K562 (cell line): ENCODE measurements at regions of chr15 and their contacts with region 1.

Region 1: GRCh38 chr15:92930776-92931175 is 30.7 kb downstream of the CHD2 start:
- DNase-seq: no peak
- ATAC-seq: peak; percentile 25
- H3K4me3 ChIP-seq: no peak overlapping the region
- H3K27ac ChIP-seq: no peak overlapping the region
- H3K4me1 ChIP-seq: no peaks in the 10 kb centered on the region
- H3K27me3 ChIP-seq: no peaks in the 10 kb centered on the region
- CTCF ChIP-seq: no peak
- EP300 ChIP-seq: no peak
- POLR2A ChIP-seq: no peak
- RAD21 ChIP-seq: no peak

Region 2: GRCh38 chr15:92979011-92979701 is 48.4 kb after region 1 on chr15:
- CTCF ChIA-PET with region 1: no interaction called
- POLR2A ChIA-PET with region 1: no interaction called
- in situ Hi-C with region 1: no loop called
- intact Hi-C with region 1: loop called (anchors 5 kb)
- DNase-seq: no peak
- ATAC-seq: no peak
- H3K4me3 ChIP-seq: no peak overlapping the region
- H3K27ac ChIP-seq: no peak overlapping the region
- H3K4me1 ChIP-seq: no peaks in the 10 kb centered on the region
- H3K27me3 ChIP-seq: no peaks in the 10 kb centered on the region
- CTCF ChIP-seq: no peak
- EP300 ChIP-seq: no peak
- POLR2A ChIP-seq: no peak
- RAD21 ChIP-seq: no peak